IMR-90 (cell line): ENCODE measurements at regions of chr7 and their contacts with region 1.

Region 1: GRCh38 chr7:78690174-78690573 is 763.3 kb downstream of the MAGI2 start:
- DNase-seq: peak; percentile 69
- ATAC-seq: peak; percentile 90
- H3K4me3 ChIP-seq: no peak overlapping the region
- H3K27ac ChIP-seq: no peak overlapping the region
- H3K4me1 ChIP-seq: no peaks in the 10 kb centered on the region; the same call in 1 of the 2 replicates
- H3K27me3 ChIP-seq: no peaks in the 10 kb centered on the region
- CTCF ChIP-seq: no peak
- POLR2A ChIP-seq: no peak
- RAD21 ChIP-seq: no peak

Region 2: GRCh38 chr7:79282063-79282694 is 592.0 kb after region 1 on chr7:
- CTCF ChIA-PET with region 1: no interaction called
- POLR2A ChIA-PET with region 1: no interaction called
- dilution Hi-C with region 1: no loop called
- in situ Hi-C with region 1: no loop called
- intact Hi-C with region 1: loop called (anchors 10 kb)
- DNase-seq: peak; percentile 86
- ATAC-seq: peak; percentile 38
- H3K4me3 ChIP-seq: no peak overlapping the region; the same call in 1 of the 2 replicates
- H3K27ac ChIP-seq: peak overlapping the region; percentile 54
- H3K4me1 ChIP-seq: peaks cover 19% of the 10 kb centered on the region
- H3K27me3 ChIP-seq: no peaks in the 10 kb centered on the region
- CTCF ChIP-seq: peak; percentile 58
- POLR2A ChIP-seq: no peak
- RAD21 ChIP-seq: peak; percentile 56